Heart left ventricle (tissue), 16 donors: ENCODE measurements at regions of chr9 and their contacts with region 1.

Region 1: DNA sequence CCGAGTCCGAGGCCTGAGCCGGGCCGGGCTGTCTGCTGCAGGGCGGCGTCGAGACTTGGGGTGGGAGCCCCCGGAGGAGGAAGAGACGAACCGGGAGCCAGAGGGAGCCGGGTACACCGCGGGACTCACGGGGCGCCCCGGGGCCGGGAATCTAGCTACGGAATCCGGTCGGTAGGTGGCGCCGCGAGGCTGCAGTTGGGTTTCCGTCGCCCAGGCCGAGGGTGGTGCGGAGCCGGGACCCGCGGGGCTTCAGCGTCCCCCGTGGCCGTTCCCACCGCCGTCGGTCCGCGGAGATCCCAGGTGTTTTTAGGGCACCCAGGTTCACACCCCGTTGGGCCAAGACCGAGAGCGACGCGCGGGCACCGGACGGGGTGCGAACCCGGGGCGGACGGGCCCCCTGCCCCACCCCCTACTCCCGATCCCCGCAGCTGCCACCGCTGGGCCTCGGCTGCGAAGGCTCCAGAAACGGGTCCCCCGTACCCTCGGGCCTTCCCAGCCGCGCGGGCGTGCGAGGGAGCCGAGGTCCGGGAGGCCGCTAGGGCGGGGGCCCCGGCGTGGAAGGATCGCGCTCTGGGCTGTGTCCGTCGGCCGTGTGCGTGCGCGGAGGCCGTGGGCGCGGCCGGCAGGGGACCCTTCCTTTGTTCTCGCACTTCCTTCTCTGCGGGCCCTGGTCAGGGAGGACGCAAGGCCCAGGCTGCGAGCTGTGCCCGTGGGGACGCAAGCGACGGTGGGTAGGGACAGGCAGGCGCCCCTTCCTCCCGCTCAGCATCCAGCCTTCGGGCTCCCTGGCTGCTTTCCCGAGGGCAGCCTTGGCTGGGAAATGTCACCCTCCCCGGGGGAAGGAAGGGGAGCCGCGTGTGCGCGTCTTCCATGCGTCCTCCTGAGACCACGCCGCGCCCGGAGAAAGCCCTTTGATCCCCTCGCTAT is 146.6 kb downstream of the GAPVD1 start:
- DNase-seq: peak; percentile 71 to 90 (median 78)
- ATAC-seq: peak; percentile 70 to 92 (median 88)
- H3K4me3 ChIP-seq: peak overlapping the region; percentile 36 to 77 (median 68)
- H3K27ac ChIP-seq: peak overlapping the region in 7 of 12 donors; percentile 9 to 64 (median 42)
- H3K4me1 ChIP-seq: peaks cover 0 to 13% (median 5%) of the 10 kb centered on the region in 12 donors
- H3K27me3 ChIP-seq: peaks cover 0 to 3% (median 0%) of the 10 kb centered on the region in 9 donors
- CTCF ChIP-seq: peak; percentile 70 to 98 (median 92)
- POLR2A ChIP-seq: no peak

Region 2: GRCh38 chr9:125460840-125461635 is 52.8 kb after region 1 on chr9:
- intact Hi-C with region 1: loop called in 1 of 10 experiments (anchors 10 kb)
- DNase-seq: no peak
- ATAC-seq: peak; percentile 51 to 63 (median 60)
- H3K4me3 ChIP-seq: no peak overlapping the region
- H3K27ac ChIP-seq: no peak overlapping the region
- H3K4me1 ChIP-seq: peaks cover 0 to 10% (median 0%) of the 10 kb centered on the region in 12 donors
- H3K27me3 ChIP-seq: no peaks in the 10 kb centered on the region
- CTCF ChIP-seq: no peak
- POLR2A ChIP-seq: no peak

Region 3: DNA sequence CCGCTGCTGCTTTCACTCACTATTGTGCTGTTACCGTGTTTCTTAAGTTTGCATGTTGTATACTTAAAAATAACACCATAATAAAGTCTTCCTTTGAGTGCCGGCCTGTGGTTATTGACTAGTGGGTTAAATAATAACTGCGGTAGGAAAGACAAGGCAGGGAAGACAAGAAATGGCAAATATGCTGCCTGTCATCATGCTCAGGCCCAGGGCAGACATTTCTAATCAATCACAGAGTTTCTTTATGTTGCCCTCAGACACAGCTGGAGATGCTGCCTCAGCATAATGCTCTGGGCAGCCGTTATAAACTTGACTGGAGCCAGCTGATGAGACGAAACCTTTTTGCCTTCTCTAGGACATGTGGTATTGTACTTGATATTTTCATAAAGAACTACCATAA is 68.4 kb after region 1 on chr9:
- intact Hi-C with region 1: no loop called
- DNase-seq: no peak
- ATAC-seq: no peak
- H3K4me3 ChIP-seq: no peak overlapping the region
- H3K27ac ChIP-seq: no peak overlapping the region
- H3K4me1 ChIP-seq: peaks cover 0 to 44% (median 21%) of the 10 kb centered on the region in 12 donors
- H3K27me3 ChIP-seq: no peaks in the 10 kb centered on the region
- CTCF ChIP-seq: no peak
- POLR2A ChIP-seq: no peak

Region 4: DNA sequence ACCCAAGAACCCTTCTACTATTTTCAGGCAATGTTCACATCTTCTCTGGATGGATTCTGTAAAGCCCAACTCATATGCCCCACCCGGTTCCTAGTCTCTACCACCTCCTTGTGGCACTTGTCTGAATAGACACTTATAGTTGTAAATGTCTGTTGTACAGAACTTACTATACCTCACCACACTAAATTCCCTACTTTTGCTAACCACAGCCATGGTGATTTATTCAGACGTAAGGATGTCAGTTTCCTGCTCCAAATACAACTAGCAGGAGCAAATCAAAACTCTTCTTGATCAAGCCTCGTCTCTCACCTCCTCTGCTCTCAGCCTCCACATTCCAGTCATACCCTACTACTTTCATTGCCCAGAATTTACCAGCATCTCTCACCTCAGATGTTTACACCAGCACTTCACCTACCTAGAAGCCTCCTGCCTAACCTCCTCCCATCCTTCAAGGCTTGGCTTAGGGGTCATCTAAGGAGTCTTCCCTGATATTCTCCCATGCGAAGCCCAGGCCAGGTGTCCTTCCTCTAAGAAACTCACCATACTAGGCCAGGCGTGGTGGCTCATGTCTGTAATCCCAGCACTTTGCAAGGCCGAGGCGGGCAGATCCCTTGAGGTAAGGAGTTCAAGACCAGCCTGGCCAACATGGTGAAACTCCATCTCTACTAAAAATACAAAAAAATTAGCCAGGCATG is 223.3 kb after region 1 on chr9:
- intact Hi-C with region 1: loop called in 8 of 10 experiments (anchors 2 to 10 kb)
- DNase-seq: no peak
- ATAC-seq: peak in 3 of 4 donors; percentile 74 to 78 (median 75)
- H3K4me3 ChIP-seq: no peak overlapping the region
- H3K27ac ChIP-seq: peak overlapping the region in 1 of 12 donors; percentile 80
- H3K4me1 ChIP-seq: peaks cover 0 to 75% (median 22%) of the 10 kb centered on the region in 12 donors
- H3K27me3 ChIP-seq: no peaks in the 10 kb centered on the region
- CTCF ChIP-seq: peak; percentile 34 to 69 (median 60)
- POLR2A ChIP-seq: no peak

Region 5: GRCh38 chr9:126228781-126229444 is 820.7 kb after region 1 on chr9:
- intact Hi-C with region 1: loop called (anchors 1 to 5 kb)
- DNase-seq: peak; percentile 50 to 85 (median 64)
- ATAC-seq: peak; percentile 78 to 93 (median 91)
- H3K4me3 ChIP-seq: no peak overlapping the region
- H3K27ac ChIP-seq: no peak overlapping the region
- H3K4me1 ChIP-seq: no peaks in the 10 kb centered on the region
- H3K27me3 ChIP-seq: peaks cover 0 to 18% (median 0%) of the 10 kb centered on the region in 9 donors
- CTCF ChIP-seq: peak; percentile 85 to 93 (median 90)
- POLR2A ChIP-seq: no peak

Region 6: GRCh38 chr9:126407125-126407870 is 999.1 kb after region 1 on chr9:
- intact Hi-C with region 1: loop called in 2 of 10 experiments (anchors 10 kb)
- DNase-seq: no peak
- ATAC-seq: peak in 2 of 4 donors; percentile 52 to 54
- H3K4me3 ChIP-seq: no peak overlapping the region
- H3K27ac ChIP-seq: no peak overlapping the region
- H3K4me1 ChIP-seq: peaks cover 0 to 18% (median 9%) of the 10 kb centered on the region in 12 donors
- H3K27me3 ChIP-seq: no peaks in the 10 kb centered on the region
- CTCF ChIP-seq: no peak
- POLR2A ChIP-seq: no peak

Region 7: DNA sequence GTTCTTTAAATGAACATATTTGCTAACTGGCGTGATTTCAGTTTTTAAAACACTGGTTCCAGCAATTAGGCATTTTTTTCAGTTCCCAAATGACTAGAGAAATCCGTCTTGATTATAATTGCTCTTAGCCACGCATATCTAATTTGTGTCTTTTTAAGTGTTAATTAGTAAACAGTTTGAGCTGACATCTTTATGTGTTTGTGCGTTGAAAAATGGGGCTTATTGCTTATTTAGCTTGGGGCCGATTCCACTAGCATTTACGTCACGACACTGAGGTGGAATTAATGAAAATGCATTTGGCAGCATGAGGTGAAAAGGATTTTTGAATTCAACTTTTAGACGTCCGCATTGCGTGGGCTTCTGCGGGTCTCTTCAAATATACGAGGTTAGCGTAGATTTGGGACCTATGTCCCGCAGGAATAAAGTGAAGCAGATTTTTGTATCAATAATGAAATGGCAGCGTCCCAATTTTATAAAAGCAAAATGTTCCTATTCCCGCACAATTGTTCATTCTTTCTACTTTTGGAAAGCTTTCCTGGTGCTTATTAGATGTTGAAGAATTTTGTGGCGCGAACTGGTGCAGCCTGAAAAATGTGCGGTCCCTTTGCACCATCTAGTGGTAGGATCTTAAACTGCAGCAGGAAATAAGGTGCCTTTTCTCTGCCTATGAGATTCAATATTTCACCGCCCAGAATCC is 1082.8 kb after region 1 on chr9:
- intact Hi-C with region 1: loop called in 3 of 10 experiments (anchors 2 to 5 kb)
- DNase-seq: no peak
- ATAC-seq: peak in 3 of 4 donors; percentile 47 to 55 (median 53)
- H3K4me3 ChIP-seq: no peak overlapping the region
- H3K27ac ChIP-seq: no peak overlapping the region
- H3K4me1 ChIP-seq: peaks cover 0 to 6% (median 1%) of the 10 kb centered on the region in 12 donors
- H3K27me3 ChIP-seq: no peaks in the 10 kb centered on the region
- CTCF ChIP-seq: peak; percentile 82 to 98 (median 91)
- POLR2A ChIP-seq: no peak